ENCODE measurements at regions of chr13 and their contacts with region 1.

Region 1: DNA sequence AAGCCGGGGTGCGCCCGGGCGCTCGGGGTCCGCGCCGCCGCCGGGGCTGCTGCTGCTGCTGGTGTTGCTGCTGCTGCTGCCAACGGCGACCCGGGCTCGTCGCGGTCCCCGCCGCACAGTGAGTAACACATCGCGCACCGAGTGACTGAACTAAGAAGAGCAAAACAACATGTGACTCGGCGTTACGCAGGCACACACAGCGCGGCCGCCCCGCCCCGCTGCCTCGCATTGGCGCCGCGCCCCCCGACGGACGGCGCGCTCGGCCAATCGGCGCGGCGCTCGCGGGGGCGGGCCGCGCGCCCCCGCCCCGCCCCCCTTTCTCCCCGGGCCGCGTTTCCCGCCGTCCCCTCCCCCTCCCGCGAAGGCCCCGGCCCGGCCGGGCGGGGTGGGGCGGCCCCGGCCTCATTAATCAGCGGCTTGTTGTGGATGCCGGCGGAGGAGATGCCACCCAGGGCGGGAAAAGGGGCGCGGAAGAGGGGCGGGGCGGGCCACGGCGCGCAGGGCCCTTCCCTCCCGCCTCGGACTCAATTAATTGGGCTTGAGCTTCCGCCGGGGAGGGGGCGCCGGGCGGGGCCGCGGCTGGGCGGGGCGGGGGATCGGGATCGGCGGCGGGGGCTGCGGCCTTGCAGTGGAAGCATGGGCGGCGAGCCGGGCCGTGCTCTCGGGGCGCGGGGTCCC is at the start of gene IRS2:
- DNase-seq: peak; percentile 81
- ATAC-seq: peak; percentile 80
- H3K4me3 ChIP-seq: peak within 1 kb of the TSS; percentile 55 to 70
- H3K27ac ChIP-seq: peak within 1 kb of the TSS; percentile 73
- H3K4me1 ChIP-seq: peaks cover 0 to 21% of the 10 kb centered on the region in 2 experiments; a peak in 3 of 4 replicates
- H3K27me3 ChIP-seq: no peaks in the 10 kb centered on the region
- CTCF ChIP-seq: no peak
- POLR2A ChIP-seq: peak; percentile 56
- RAD21 ChIP-seq: no peak
- total RNA-seq, gene IRS2: 9.2 TPM

Region 2: GRCh38 chr13:109275852-109276251 is 510.7 kb before region 1 on chr13:
- CTCF ChIA-PET with region 1: no interaction called
- POLR2A ChIA-PET with region 1: no interaction called
- RAD21 ChIA-PET with region 1: no interaction called
- intact Hi-C with region 1: loop called (anchors 2 kb)
- DNase-seq: no peak
- ATAC-seq: peak; percentile 28
- H3K4me3 ChIP-seq: no peak overlapping the region
- H3K27ac ChIP-seq: no peak overlapping the region
- H3K4me1 ChIP-seq: peaks cover 38 to 48% of the 10 kb centered on the region in 2 experiments
- H3K27me3 ChIP-seq: no peaks in the 10 kb centered on the region
- CTCF ChIP-seq: peak; percentile 4 to 77 (median 66); a peak in 4 of 6 replicates
- POLR2A ChIP-seq: no peak
- RAD21 ChIP-seq: peak; percentile 28; the same call in 1 of the 2 replicates

Region 3: GRCh38 chr13:109586509-109587346 is 199.9 kb before region 1 on chr13:
- CTCF ChIA-PET with region 1: no interaction called
- POLR2A ChIA-PET with region 1: no interaction called
- RAD21 ChIA-PET with region 1: no interaction called
- intact Hi-C with region 1: no loop called
- DNase-seq: no peak
- ATAC-seq: no peak
- H3K4me3 ChIP-seq: no peak overlapping the region
- H3K27ac ChIP-seq: no peak overlapping the region
- H3K4me1 ChIP-seq: no peaks in the 10 kb centered on the region
- H3K27me3 ChIP-seq: no peaks in the 10 kb centered on the region
- CTCF ChIP-seq: no peak
- POLR2A ChIP-seq: no peak
- RAD21 ChIP-seq: no peak

Measured in HCT116 (cell line).